MCF 10A (cell line): ENCODE measurements at regions of chr11 and their contacts with region 1.

Region 1: GRCh38 chr11:47204637-47204989 is 10.2 kb upstream of the DDB2 start:
- DNase-seq: peak; percentile 75
- H3K4me3 Mint-ChIP-seq: peak overlapping the region; percentile 19
- H3K27ac Mint-ChIP-seq: peak overlapping the region; percentile 78
- H3K4me1 Mint-ChIP-seq: peaks cover 9% of the 10 kb centered on the region
- H3K27me3 Mint-ChIP-seq: no peaks in the 10 kb centered on the region
- CTCF ChIP-seq: no peak

Region 2: GRCh38 chr11:47186076-47186936 is 18.3 kb before region 1 on chr11 and contains the start of gene PACSIN3:
- CTCF ChIA-PET with region 1: interaction called, 5 read pairs
- POLR2A ChIA-PET with region 1: interaction called, 18 read pairs
- intact Hi-C with region 1: no loop called
- DNase-seq: peak; percentile 53
- H3K4me3 Mint-ChIP-seq: peak within 1 kb of the TSS; percentile 82
- H3K27ac Mint-ChIP-seq: peak within 1 kb of the TSS; percentile 51
- H3K4me1 Mint-ChIP-seq: peaks cover 12% of the 10 kb centered on the region
- H3K27me3 Mint-ChIP-seq: no peaks in the 10 kb centered on the region
- CTCF ChIP-seq: no peak
- total RNA-seq, gene PACSIN3: 58.7 and 67.0 TPM in 2 replicates